Vagina (tissue), 2 donors: ENCODE measurements at regions of chr6 and their contacts with region 1.

Region 1: GRCh38 chr6:159716247-159717096 is 10.8 kb upstream of the WTAP start:
- DNase-seq: peak in 1 of 2 donors; percentile 98
- H3K4me3 ChIP-seq: peak overlapping the region; percentile 10 to 36
- H3K27ac ChIP-seq: peak overlapping the region; percentile 87
- H3K4me1 ChIP-seq: peaks cover 31% of the 10 kb centered on the region
- H3K27me3 ChIP-seq: no peaks in the 10 kb centered on the region
- CTCF ChIP-seq: no peak
- POLR2A ChIP-seq: no peak

Region 2: DNA sequence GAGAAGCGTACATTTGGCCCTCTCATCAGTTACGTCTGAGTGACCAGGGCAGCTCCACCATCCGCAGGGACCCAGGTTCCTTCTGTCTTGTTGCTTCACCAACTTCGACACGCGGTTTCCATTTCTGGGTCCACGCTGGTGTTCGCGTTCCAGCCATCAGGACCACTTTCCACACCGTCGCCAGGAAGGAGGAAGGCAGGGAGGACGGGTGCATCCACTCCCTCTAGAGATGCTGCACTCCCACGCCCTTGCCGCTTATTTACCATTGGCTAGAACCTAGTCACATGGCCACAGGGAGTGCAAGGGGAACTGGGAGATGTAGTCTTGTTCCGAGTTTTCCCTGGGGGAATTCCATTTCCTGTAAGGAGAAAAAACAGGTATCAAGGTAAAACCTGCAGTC is 1926.6 kb before region 1 on chr6:
- intact Hi-C with region 1: no loop called
- DNase-seq: no peak
- H3K4me3 ChIP-seq: no peak overlapping the region
- H3K27ac ChIP-seq: no peak overlapping the region
- H3K4me1 ChIP-seq: peaks cover 7% of the 10 kb centered on the region
- H3K27me3 ChIP-seq: no peaks in the 10 kb centered on the region
- CTCF ChIP-seq: no peak
- POLR2A ChIP-seq: no peak

Region 3: GRCh38 chr6:159701411-159701999 is 15.0 kb before region 1 on chr6:
- intact Hi-C with region 1: loop called (anchors 2 kb)
- DNase-seq: no peak
- H3K4me3 ChIP-seq: no peak overlapping the region
- H3K27ac ChIP-seq: peak overlapping the region; percentile 93
- H3K4me1 ChIP-seq: peaks cover 15% of the 10 kb centered on the region
- H3K27me3 ChIP-seq: no peaks in the 10 kb centered on the region
- CTCF ChIP-seq: no peak
- POLR2A ChIP-seq: no peak

Region 4: DNA sequence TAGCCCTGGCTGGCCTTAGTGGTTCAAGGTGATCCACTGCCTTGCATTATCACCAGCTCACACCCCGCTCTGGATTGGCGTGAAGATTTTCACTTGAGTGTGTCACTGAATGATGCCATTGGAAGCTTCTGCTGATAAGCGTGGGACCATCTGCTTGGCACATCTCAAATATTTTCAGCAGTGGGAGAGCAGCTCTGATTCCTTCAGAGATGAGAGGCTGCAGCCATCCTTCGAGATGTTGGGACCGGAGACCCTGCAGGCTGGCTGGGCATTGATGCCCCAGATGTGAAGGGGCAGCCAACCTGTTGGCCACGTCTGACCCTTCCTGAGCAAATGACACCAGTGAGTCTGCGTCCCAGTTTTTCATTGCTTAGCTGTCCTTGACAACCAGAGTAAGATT is 174.3 kb after region 1 on chr6 and contains the start of gene MAS1:
- intact Hi-C with region 1: no loop called
- DNase-seq: no peak
- H3K4me3 ChIP-seq: no peak within 1 kb of the TSS
- H3K27ac ChIP-seq: no peak within 1 kb of the TSS
- H3K4me1 ChIP-seq: no peaks in the 10 kb centered on the region
- H3K27me3 ChIP-seq: no peaks in the 10 kb centered on the region
- CTCF ChIP-seq: no peak
- POLR2A ChIP-seq: no peak
- total RNA-seq, gene MAS1: 0.49 TPM